Heart right ventricle (tissue), 16 donors: ENCODE measurements at regions of chr2 and their contacts with region 1.

Region 1: DNA sequence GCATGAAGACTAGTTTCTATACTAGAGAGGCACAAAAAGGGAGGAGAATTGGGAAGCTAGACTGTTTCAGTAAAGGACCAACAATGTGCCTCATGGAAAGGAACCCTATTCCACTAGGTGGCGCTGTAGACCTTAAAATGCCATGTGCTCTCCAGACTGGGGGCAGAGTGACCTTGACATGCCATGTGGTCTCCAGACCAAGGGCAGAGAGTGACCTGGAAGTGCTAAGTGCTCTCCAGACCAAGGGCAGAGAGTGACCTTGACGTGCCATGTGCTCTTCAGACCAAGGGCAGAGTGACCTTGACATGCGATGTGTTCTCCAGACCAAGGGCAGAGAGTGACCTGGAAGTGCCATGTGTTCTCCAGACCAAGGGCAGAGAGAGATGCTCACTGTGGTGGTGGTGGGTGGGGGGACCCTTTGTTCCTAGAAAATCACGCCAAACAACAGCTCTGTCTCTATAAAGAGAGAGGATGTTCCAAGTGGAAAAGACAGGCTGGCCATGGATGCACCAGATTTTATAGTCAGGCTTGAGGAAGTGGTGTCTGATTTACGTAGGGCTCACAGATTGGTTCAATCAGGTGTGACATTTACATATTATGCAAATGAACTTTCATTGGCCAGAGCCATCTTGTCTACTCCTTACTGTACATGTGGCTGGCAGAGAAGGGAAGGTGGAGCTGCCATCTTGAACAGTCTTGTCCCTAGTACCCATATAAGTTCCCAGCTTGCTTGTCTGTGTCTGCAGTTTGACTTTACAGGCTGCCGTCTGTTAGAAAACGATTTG is 344.0 kb upstream of the DDX18 start:
- DNase-seq: peak in 1 of 2 donors; percentile 6
- ATAC-seq: peak in 1 of 8 donors; percentile 42
- H3K4me3 ChIP-seq: no peak overlapping the region
- H3K27ac ChIP-seq: no peak overlapping the region
- H3K4me1 ChIP-seq: no peaks in the 10 kb centered on the region
- H3K27me3 ChIP-seq: peaks cover 0 to 7% (median 0%) of the 10 kb centered on the region in 7 donors
- CTCF ChIP-seq: peak; percentile 21 to 68 (median 52)

Region 2: GRCh38 chr2:117349687-117350086 is 120.8 kb before region 1 on chr2:
- intact Hi-C with region 1: no loop called
- DNase-seq: no peak
- ATAC-seq: no peak
- H3K4me3 ChIP-seq: no peak overlapping the region
- H3K27ac ChIP-seq: no peak overlapping the region
- H3K4me1 ChIP-seq: no peaks in the 10 kb centered on the region
- H3K27me3 ChIP-seq: no peaks in the 10 kb centered on the region
- CTCF ChIP-seq: no peak

Region 3: DNA sequence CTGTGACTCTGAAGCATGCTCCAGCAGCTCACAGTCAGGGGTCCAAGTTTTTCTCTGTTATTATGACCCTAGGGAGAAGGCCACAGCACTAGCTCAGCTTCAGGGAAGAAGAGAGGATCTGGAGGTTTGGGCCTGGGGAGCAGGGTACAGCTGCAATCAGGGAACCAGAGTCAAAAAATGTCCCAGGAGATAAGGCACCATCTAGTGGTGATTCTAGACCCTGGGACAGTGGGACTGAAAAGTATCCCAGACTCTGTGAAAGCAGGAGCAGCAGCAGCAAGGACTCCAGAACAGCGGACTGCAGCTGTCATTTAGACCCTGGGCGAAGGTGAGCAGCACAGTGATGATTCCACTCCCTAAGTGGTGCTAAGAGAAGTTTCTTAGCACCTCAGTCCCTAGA is 65.6 kb after region 1 on chr2:
- intact Hi-C with region 1: loop called in 1 of 10 experiments (anchors 10 kb)
- DNase-seq: no peak
- ATAC-seq: no peak
- H3K4me3 ChIP-seq: no peak overlapping the region
- H3K27ac ChIP-seq: no peak overlapping the region
- H3K4me1 ChIP-seq: no peaks in the 10 kb centered on the region
- H3K27me3 ChIP-seq: peaks cover 0 to 4% (median 0%) of the 10 kb centered on the region in 7 donors
- CTCF ChIP-seq: peak in 7 of 9 donors; percentile 21 to 53 (median 33)

Region 4: GRCh38 chr2:117771969-117772630 is 301.6 kb after region 1 on chr2:
- intact Hi-C with region 1: loop called in 6 of 10 experiments (anchors 5 to 10 kb)
- DNase-seq: no peak
- ATAC-seq: no peak
- H3K4me3 ChIP-seq: no peak overlapping the region
- H3K27ac ChIP-seq: no peak overlapping the region
- H3K4me1 ChIP-seq: no peaks in the 10 kb centered on the region
- H3K27me3 ChIP-seq: peaks cover 0 to 7% (median 0%) of the 10 kb centered on the region in 7 donors
- CTCF ChIP-seq: peak in 7 of 9 donors; percentile 37 to 59 (median 45)

Region 5: DNA sequence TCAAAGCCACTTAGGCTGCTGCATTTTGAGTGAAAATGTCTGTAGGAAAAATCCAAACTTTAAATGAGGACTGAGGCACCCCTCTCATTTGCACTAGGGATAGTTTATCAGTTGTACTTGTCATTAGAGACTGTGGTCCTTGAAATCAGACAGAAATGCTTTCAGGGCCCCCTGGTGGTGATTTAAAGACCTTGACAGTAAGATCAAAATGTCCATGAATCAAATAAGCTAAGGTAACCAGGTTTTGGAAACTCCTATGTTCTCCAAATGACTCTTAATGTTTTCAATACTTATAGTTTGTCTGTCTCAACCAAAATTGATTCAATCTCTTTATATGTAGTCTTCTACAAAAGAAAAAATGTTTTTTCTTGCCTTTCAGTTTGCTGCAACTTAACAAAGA is 315.2 kb after region 1 on chr2:
- intact Hi-C with region 1: loop called in 4 of 10 experiments (anchors 2 to 5 kb)
- DNase-seq: peak in 1 of 2 donors; percentile 10
- ATAC-seq: no peak
- H3K4me3 ChIP-seq: no peak overlapping the region
- H3K27ac ChIP-seq: no peak overlapping the region
- H3K4me1 ChIP-seq: no peaks in the 10 kb centered on the region
- H3K27me3 ChIP-seq: no peaks in the 10 kb centered on the region
- CTCF ChIP-seq: peak; percentile 22 to 74 (median 63)